B cell (primary cell): ENCODE measurements at regions of chr17 and their contacts with region 1.

Region 1: GRCh38 chr17:75393523-75394331 is 11.8 kb downstream of the GRB2 start:
- DNase-seq: peak; percentile 94
- ATAC-seq: peak; percentile 95
- H3K4me3 ChIP-seq: peak overlapping the region; percentile 49 to 78 (median 63)
- H3K4me3 Mint-ChIP-seq: peak overlapping the region; percentile 86
- H3K27ac ChIP-seq: peak overlapping the region; percentile 17 to 79
- H3K27ac Mint-ChIP-seq: peak overlapping the region; percentile 79
- H3K4me1 ChIP-seq: peaks cover 68 to 76% of the 10 kb centered on the region in 2 donors
- H3K4me1 Mint-ChIP-seq: peaks cover 81% of the 10 kb centered on the region
- H3K27me3 ChIP-seq: no peaks in the 10 kb centered on the region
- H3K27me3 Mint-ChIP-seq: no peaks in the 10 kb centered on the region
- CTCF ChIP-seq: peak; percentile 12

Region 2: GRCh38 chr17:75325827-75326225 is 67.9 kb before region 1 on chr17:
- CTCF ChIA-PET with region 1: interaction called, 56 read pairs
- POLR2A ChIA-PET with region 1: interaction called, 9 read pairs
- intact Hi-C with region 1: no loop called
- DNase-seq: peak; percentile 42
- ATAC-seq: no peak
- H3K4me3 ChIP-seq: peak overlapping the region in 2 of 5 experiments; percentile 1 to 6
- H3K4me3 Mint-ChIP-seq: peak overlapping the region; percentile 64
- H3K27ac ChIP-seq: peak overlapping the region; percentile 75 to 83
- H3K27ac Mint-ChIP-seq: peak overlapping the region; percentile 90
- H3K4me1 ChIP-seq: peaks cover 61 to 67% of the 10 kb centered on the region in 2 donors
- H3K4me1 Mint-ChIP-seq: peaks cover 59% of the 10 kb centered on the region
- H3K27me3 ChIP-seq: no peaks in the 10 kb centered on the region
- H3K27me3 Mint-ChIP-seq: no peaks in the 10 kb centered on the region
- CTCF ChIP-seq: no peak

Region 3: DNA sequence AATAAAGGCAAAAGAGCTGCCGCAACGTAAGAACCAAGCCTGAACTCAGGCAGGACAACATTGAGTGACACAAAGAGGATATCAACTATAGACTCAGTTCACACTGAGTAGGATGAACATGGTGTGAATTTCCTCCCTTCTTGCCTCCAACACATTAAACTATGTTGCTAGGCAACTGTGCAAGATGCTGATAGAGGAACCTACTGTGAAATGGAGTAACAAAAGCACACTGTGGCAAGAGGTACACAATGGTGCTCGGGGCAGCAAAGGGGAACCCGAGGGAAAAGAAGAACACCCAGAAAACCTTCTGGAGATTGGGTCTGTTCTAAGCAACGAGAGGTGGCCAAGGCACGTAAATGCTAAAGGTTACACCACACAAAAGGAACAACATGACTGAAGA is 22.4 kb before region 1 on chr17:
- CTCF ChIA-PET with region 1: interaction called, 3 read pairs
- POLR2A ChIA-PET with region 1: interaction called, 3 read pairs
- intact Hi-C with region 1: loop called (anchors 2 kb)
- DNase-seq: peak; percentile 73
- ATAC-seq: peak; percentile 62
- H3K4me3 ChIP-seq: peak overlapping the region in 1 of 5 experiments; percentile 3
- H3K4me3 Mint-ChIP-seq: peak overlapping the region; percentile 74
- H3K27ac ChIP-seq: peak overlapping the region; percentile 42 to 76
- H3K27ac Mint-ChIP-seq: peak overlapping the region; percentile 84
- H3K4me1 ChIP-seq: peaks cover 64 to 85% of the 10 kb centered on the region in 2 donors
- H3K4me1 Mint-ChIP-seq: peaks cover 80% of the 10 kb centered on the region
- H3K27me3 ChIP-seq: no peaks in the 10 kb centered on the region
- H3K27me3 Mint-ChIP-seq: no peaks in the 10 kb centered on the region
- CTCF ChIP-seq: no peak

Region 4: GRCh38 chr17:75405365-75406221 is 11.9 kb after region 1 on chr17 and contains the start of gene GRB2:
- CTCF ChIA-PET with region 1: interaction called, 7 read pairs
- POLR2A ChIA-PET with region 1: no interaction called
- intact Hi-C with region 1: loop called (anchors 1 kb)
- DNase-seq: peak; percentile 98
- ATAC-seq: peak; percentile 89
- H3K4me3 ChIP-seq: peak within 1 kb of the TSS; percentile 91 to 99 (median 99)
- H3K4me3 Mint-ChIP-seq: peak within 1 kb of the TSS; percentile 98
- H3K27ac ChIP-seq: peak within 1 kb of the TSS; percentile 79 to 92
- H3K27ac Mint-ChIP-seq: peak within 1 kb of the TSS; percentile 97
- H3K4me1 ChIP-seq: peaks cover 32 to 43% of the 10 kb centered on the region in 2 donors
- H3K4me1 Mint-ChIP-seq: peaks cover 39% of the 10 kb centered on the region
- H3K27me3 ChIP-seq: no peaks in the 10 kb centered on the region
- H3K27me3 Mint-ChIP-seq: no peaks in the 10 kb centered on the region
- CTCF ChIP-seq: no peak
- total RNA-seq, gene GRB2: 219 and 224 TPM in 2 replicates

Region 5: DNA sequence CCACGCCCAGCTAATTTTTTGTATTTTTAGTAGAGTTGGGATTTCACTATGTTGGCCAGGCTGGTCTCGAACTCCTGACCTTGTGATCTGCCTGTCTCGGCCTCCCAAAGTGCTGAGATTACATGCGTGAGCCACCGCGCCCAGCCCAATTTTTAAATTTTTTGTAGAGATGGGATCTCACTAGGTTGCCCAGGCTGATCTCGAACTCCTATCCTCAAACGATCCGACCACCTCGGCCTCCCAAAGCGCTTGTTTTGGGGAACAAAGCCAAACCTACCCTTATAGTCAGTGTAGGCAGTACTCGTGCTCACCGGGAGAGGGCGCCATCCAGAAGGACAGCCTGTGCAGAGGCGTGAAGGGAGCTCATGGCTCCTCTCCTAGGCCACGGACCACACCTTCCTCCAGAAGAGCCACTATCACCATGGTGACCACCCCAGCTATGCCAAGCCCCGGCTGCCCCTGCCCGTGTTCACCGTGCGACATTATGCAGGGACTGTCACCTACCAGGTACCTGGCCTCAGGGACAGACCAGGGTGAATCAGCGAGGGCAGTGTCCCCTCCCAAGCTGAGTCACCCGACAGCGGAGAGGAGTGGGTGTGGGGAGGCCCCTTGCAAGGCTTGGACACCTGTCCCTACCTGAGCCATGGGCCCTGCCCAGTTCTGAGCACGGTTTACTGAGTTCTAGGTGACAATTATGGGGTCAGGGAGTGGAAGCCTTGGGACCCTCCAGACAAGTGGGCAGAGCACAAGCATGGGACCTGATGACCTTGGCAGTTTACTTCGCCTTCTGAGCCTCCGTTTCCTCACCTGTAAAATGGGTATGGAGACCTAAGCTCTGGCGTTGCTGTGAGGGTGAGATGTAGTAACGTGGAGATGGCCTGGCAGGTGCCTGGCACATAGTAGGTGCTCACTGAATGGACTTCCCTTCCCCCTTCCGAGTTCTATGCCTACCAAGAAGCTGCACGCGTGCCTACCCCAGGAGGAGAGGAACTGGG is 207.6 kb after region 1 on chr17:
- CTCF ChIA-PET with region 1: no interaction called
- POLR2A ChIA-PET with region 1: no interaction called
- intact Hi-C with region 1: no loop called
- DNase-seq: peak; percentile 68
- ATAC-seq: peak; percentile 77
- H3K4me3 ChIP-seq: no peak overlapping the region
- H3K4me3 Mint-ChIP-seq: no peak overlapping the region
- H3K27ac ChIP-seq: no peak overlapping the region
- H3K27ac Mint-ChIP-seq: no peak overlapping the region
- H3K4me1 ChIP-seq: no peaks in the 10 kb centered on the region
- H3K4me1 Mint-ChIP-seq: no peaks in the 10 kb centered on the region
- H3K27me3 ChIP-seq: no peaks in the 10 kb centered on the region
- H3K27me3 Mint-ChIP-seq: no peaks in the 10 kb centered on the region
- CTCF ChIP-seq: peak; percentile 76